ENCODE measurements at regions of chr18 and their contacts with region 1.

Region 1: GRCh38 chr18:2704541-2704940 is 49.0 kb downstream of the SMCHD1 start:
- DNase-seq: no peak
- ATAC-seq: no peak
- H3K4me3 Mint-ChIP-seq: no peak overlapping the region
- H3K27ac Mint-ChIP-seq: peak overlapping the region; percentile 59
- H3K4me1 Mint-ChIP-seq: peaks cover 20% of the 10 kb centered on the region
- H3K27me3 Mint-ChIP-seq: no peaks in the 10 kb centered on the region

Region 2: GRCh38 chr18:2692508-2692907 is 12.0 kb before region 1 on chr18:
- CTCF ChIA-PET with region 1: interaction called, 11 read pairs
- POLR2A ChIA-PET with region 1: no interaction called
- intact Hi-C with region 1: no loop called
- DNase-seq: no peak
- ATAC-seq: no peak
- H3K4me3 Mint-ChIP-seq: no peak overlapping the region
- H3K27ac Mint-ChIP-seq: peak overlapping the region; percentile 55
- H3K4me1 Mint-ChIP-seq: peaks cover 36% of the 10 kb centered on the region
- H3K27me3 Mint-ChIP-seq: no peaks in the 10 kb centered on the region

Region 3: DNA sequence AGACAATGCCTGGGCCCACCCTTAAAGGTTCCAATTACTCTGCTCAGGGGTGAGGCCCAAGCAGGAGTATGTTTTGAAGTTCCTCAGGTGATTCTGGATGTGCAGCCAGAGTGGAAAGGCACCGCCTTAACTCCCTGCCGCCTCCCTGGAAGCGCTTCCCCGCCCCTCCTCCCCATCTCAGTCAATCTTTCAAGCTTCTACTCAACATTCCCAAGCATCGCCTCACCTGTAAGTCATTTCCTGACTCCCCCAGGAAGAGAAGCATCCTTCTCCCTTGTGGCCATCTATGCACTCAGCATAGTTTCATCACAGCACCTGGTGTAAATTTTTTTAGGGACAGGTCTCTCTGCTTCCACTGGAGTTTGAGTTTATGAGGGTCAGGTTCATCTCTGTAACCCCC is 624.9 kb after region 1 on chr18:
- CTCF ChIA-PET with region 1: no interaction called
- POLR2A ChIA-PET with region 1: no interaction called
- intact Hi-C with region 1: no loop called
- DNase-seq: no peak
- ATAC-seq: no peak
- H3K4me3 Mint-ChIP-seq: no peak overlapping the region
- H3K27ac Mint-ChIP-seq: no peak overlapping the region
- H3K4me1 Mint-ChIP-seq: no peaks in the 10 kb centered on the region
- H3K27me3 Mint-ChIP-seq: peaks cover 10% of the 10 kb centered on the region

Region 4: DNA sequence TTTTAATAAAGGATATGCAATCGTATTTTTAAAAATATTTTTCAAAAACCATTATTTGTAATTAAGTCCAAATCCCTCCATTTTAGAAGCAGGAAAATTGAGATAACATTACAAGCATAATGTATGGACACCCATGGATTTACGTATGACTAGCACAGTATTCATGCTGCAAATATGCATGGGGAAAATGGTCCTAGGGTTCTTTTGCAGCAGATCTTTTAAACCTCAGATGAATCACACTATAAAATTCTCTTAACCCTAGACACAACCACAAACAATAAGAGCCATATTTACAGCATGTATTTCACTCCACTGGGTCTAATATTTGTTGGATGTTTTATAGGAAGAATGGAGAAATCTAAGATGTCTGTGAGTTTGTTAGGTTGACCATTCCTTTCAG is 1198.8 kb after region 1 on chr18:
- CTCF ChIA-PET with region 1: no interaction called
- POLR2A ChIA-PET with region 1: no interaction called
- intact Hi-C with region 1: no loop called
- DNase-seq: no peak
- ATAC-seq: no peak
- H3K4me3 Mint-ChIP-seq: no peak overlapping the region
- H3K27ac Mint-ChIP-seq: no peak overlapping the region
- H3K4me1 Mint-ChIP-seq: no peaks in the 10 kb centered on the region
- H3K27me3 Mint-ChIP-seq: peaks cover 6% of the 10 kb centered on the region